Calu3 (cell line): ENCODE measurements at regions of chr5 and their contacts with region 1.

Region 1: DNA sequence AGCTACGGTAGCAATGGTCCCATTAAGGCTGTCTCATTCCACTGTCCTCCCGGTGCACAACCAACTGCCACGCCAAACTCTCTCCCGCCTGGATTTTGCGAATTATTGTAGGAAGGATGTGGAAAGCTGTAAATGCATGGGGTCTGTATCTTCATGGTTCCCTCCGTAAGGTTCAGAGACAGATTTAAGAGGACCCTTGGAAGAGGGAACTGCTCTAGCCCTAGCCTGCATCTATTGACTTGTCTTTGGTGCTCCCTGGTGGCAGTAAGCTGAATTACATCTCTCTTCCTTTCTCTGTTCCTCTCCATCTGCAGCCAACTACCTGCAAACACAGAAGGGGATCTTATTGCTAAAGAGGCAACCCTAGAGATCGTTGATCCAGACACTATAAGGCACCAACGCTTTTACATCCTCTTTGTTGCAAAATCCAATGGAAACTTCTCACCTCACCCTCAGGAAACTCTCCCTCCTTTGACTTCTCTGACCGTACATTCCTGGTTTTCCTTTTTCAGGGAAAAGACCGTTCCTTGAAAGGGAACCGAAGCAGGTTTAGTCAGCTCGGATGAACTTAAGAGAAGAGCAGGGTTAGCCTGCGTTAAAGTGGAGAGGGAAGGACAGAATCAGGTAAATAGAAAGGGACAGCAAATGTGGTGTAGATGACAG is 11.9 kb downstream of the CAPSL start:
- DNase-seq: peak; percentile 64
- H3K4me3 Mint-ChIP-seq: no peak overlapping the region
- H3K27ac Mint-ChIP-seq: no peak overlapping the region
- H3K4me1 Mint-ChIP-seq: no peaks in the 10 kb centered on the region
- H3K27me3 Mint-ChIP-seq: peaks cover 38% of the 10 kb centered on the region
- CTCF ChIP-seq: peak; percentile 79

Region 2: GRCh38 chr5:35229076-35230037 is 697.2 kb before region 1 on chr5:
- CTCF ChIA-PET with region 1: no interaction called
- intact Hi-C with region 1: loop called (anchors 10 kb)
- DNase-seq: peak; percentile 55
- H3K4me3 Mint-ChIP-seq: peak overlapping the region; percentile 72
- H3K27ac Mint-ChIP-seq: peak overlapping the region; percentile 37
- H3K4me1 Mint-ChIP-seq: peaks cover 10% of the 10 kb centered on the region
- H3K27me3 Mint-ChIP-seq: peaks cover 70% of the 10 kb centered on the region
- CTCF ChIP-seq: no peak

Region 3: GRCh38 chr5:35651002-35651756 is 275.3 kb before region 1 on chr5:
- CTCF ChIA-PET with region 1: interaction called, 6 read pairs
- intact Hi-C with region 1: loop called (anchors 1 kb)
- DNase-seq: peak; percentile 32
- H3K4me3 Mint-ChIP-seq: no peak overlapping the region
- H3K27ac Mint-ChIP-seq: no peak overlapping the region
- H3K4me1 Mint-ChIP-seq: no peaks in the 10 kb centered on the region
- H3K27me3 Mint-ChIP-seq: no peaks in the 10 kb centered on the region
- CTCF ChIP-seq: peak; percentile 38

Region 4: GRCh38 chr5:35777358-35778087 is 149.0 kb before region 1 on chr5:
- CTCF ChIA-PET with region 1: interaction called, 3 read pairs
- intact Hi-C with region 1: loop called (anchors 1 kb)
- DNase-seq: peak; percentile 62
- H3K4me3 Mint-ChIP-seq: no peak overlapping the region
- H3K27ac Mint-ChIP-seq: no peak overlapping the region
- H3K4me1 Mint-ChIP-seq: no peaks in the 10 kb centered on the region
- H3K27me3 Mint-ChIP-seq: no peaks in the 10 kb centered on the region
- CTCF ChIP-seq: peak; percentile 14

Region 5: DNA sequence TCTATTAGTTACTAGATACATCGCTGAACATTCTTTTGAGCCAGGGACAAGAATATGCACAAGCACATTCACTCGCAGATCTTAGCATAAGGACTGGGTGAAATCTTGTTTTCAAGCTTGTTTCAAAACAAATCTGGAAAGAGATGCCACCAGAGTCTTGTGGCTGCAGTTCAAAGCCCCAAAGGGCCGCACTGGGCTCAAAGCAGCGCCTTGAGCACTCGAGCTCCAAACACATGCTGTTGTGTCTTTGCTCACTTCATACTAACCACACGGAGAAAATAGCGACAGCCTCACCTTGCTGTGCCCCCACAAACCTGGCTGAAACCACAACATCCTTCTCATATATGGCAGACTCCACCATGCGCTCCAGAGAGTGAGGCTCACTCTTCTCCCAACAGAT is 104.0 kb before region 1 on chr5:
- CTCF ChIA-PET with region 1: no interaction called
- intact Hi-C with region 1: no loop called
- DNase-seq: no peak
- H3K4me3 Mint-ChIP-seq: no peak overlapping the region
- H3K27ac Mint-ChIP-seq: no peak overlapping the region
- H3K4me1 Mint-ChIP-seq: no peaks in the 10 kb centered on the region
- H3K27me3 Mint-ChIP-seq: no peaks in the 10 kb centered on the region
- CTCF ChIP-seq: no peak

Region 6: GRCh38 chr5:35856765-35857291 is 69.7 kb before region 1 on chr5 and contains the start of gene IL7R:
- CTCF ChIA-PET with region 1: no interaction called
- intact Hi-C with region 1: no loop called
- DNase-seq: no peak
- H3K4me3 Mint-ChIP-seq: no peak within 1 kb of the TSS
- H3K27ac Mint-ChIP-seq: no peak within 1 kb of the TSS
- H3K4me1 Mint-ChIP-seq: no peaks in the 10 kb centered on the region
- H3K27me3 Mint-ChIP-seq: no peaks in the 10 kb centered on the region
- CTCF ChIP-seq: no peak
- total RNA-seq, gene IL7R: 0.19 and 0.20 TPM in 2 replicates

Region 7: DNA sequence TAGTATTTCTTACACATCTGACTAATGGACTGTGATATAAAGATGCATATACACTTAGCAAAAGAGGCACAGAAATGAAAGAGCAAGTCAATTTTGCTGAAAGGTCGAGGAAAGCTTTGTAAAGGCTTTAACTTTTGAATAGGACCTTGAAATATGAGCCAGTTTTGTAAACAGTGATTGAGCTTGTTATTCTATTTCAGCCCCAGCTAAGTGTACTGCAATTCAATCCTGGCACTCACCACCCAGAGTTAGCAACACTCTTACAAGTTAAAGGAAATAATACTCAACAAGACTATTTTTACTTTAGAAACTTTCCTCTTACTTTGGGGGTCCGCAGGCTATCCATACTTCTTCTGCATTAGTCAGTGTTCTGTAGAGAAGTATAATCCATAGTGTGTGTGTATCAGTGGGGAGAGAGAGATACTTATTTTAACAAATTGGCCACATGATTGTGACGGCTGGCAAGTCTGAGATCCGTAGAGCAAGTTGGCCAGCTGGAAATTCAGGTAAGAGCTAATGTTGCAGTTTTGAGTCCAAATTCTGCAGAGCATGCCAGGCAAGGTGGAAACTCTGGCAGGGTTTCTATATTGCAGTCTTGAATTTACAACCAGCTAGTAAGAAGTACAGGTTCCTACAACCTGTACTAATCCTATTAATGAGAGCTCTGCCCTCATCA is 36.4 kb before region 1 on chr5:
- CTCF ChIA-PET with region 1: no interaction called
- intact Hi-C with region 1: no loop called
- DNase-seq: no peak
- H3K4me3 Mint-ChIP-seq: no peak overlapping the region
- H3K27ac Mint-ChIP-seq: no peak overlapping the region
- H3K4me1 Mint-ChIP-seq: no peaks in the 10 kb centered on the region
- H3K27me3 Mint-ChIP-seq: no peaks in the 10 kb centered on the region
- CTCF ChIP-seq: no peak

Region 8: DNA sequence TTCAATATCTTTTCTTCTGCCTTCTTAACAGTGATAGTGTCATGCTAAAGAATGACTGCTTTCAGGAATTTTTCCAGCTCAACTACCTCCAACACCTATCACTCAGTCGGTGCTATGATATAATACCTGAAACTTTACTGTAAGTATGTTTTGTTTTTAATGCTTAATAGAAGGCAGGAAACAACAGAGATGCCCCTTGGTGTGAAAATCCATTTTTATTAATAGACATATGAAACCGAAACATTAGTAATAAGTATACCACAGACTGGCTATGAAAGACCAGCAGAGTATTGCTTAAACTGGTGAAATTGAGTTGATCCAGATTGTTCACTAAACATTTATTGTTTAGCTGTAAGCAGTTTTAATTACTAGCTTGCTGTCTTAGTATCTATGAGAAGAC is 250.6 kb after region 1 on chr5:
- CTCF ChIA-PET with region 1: no interaction called
- intact Hi-C with region 1: no loop called
- DNase-seq: no peak
- H3K4me3 Mint-ChIP-seq: no peak overlapping the region
- H3K27ac Mint-ChIP-seq: no peak overlapping the region
- H3K4me1 Mint-ChIP-seq: no peaks in the 10 kb centered on the region
- H3K27me3 Mint-ChIP-seq: no peaks in the 10 kb centered on the region
- CTCF ChIP-seq: no peak